CD4-positive, alpha-beta T cell (primary cell): ENCODE measurements at regions of chr2 and their contacts with region 1.

Region 1: GRCh38 chr2:174023591-174024523 is 58.7 kb upstream of the SP3 start:
- DNase-seq: peak in 3 of 14 experiments; percentile 25 to 74 (median 64)
- ATAC-seq: no peak
- H3K4me3 ChIP-seq: no peak overlapping the region
- H3K4me3 Mint-ChIP-seq: no peak overlapping the region
- H3K27ac ChIP-seq: no peak overlapping the region
- H3K27ac Mint-ChIP-seq: no peak overlapping the region
- H3K4me1 ChIP-seq: peaks cover 4% of the 10 kb centered on the region
- H3K4me1 Mint-ChIP-seq: no peaks in the 10 kb centered on the region
- H3K27me3 ChIP-seq: no peaks in the 10 kb centered on the region
- H3K27me3 Mint-ChIP-seq: no peaks in the 10 kb centered on the region
- CTCF ChIP-seq: no peak

Region 2: GRCh38 chr2:173891315-173892037 is 132.4 kb before region 1 on chr2:
- CTCF ChIA-PET with region 1: no interaction called
- POLR2A ChIA-PET with region 1: no interaction called
- intact Hi-C with region 1: no loop called
- DNase-seq: no peak
- ATAC-seq: no peak
- H3K4me3 ChIP-seq: no peak overlapping the region
- H3K4me3 Mint-ChIP-seq: no peak overlapping the region
- H3K27ac ChIP-seq: no peak overlapping the region
- H3K27ac Mint-ChIP-seq: no peak overlapping the region
- H3K4me1 ChIP-seq: no peaks in the 10 kb centered on the region
- H3K4me1 Mint-ChIP-seq: peaks cover 12% of the 10 kb centered on the region
- H3K27me3 ChIP-seq: peaks cover 0 to 8% of the 10 kb centered on the region in 2 experiments
- H3K27me3 Mint-ChIP-seq: peaks cover 15% of the 10 kb centered on the region
- CTCF ChIP-seq: no peak

Region 3: GRCh38 chr2:173978447-173978846 is 45.4 kb before region 1 on chr2:
- CTCF ChIA-PET with region 1: no interaction called
- POLR2A ChIA-PET with region 1: no interaction called
- intact Hi-C with region 1: loop called in 1 of 2 experiments (anchors 5 kb)
- DNase-seq: peak in 1 of 14 experiments; percentile 25
- ATAC-seq: no peak
- H3K4me3 ChIP-seq: no peak overlapping the region
- H3K4me3 Mint-ChIP-seq: no peak overlapping the region
- H3K27ac ChIP-seq: no peak overlapping the region
- H3K27ac Mint-ChIP-seq: no peak overlapping the region
- H3K4me1 ChIP-seq: no peaks in the 10 kb centered on the region
- H3K4me1 Mint-ChIP-seq: no peaks in the 10 kb centered on the region
- H3K27me3 ChIP-seq: no peaks in the 10 kb centered on the region
- H3K27me3 Mint-ChIP-seq: peaks cover 9% of the 10 kb centered on the region
- CTCF ChIP-seq: no peak